ENCODE measurements at regions of chr6 and their contacts with region 1.

Region 1: DNA sequence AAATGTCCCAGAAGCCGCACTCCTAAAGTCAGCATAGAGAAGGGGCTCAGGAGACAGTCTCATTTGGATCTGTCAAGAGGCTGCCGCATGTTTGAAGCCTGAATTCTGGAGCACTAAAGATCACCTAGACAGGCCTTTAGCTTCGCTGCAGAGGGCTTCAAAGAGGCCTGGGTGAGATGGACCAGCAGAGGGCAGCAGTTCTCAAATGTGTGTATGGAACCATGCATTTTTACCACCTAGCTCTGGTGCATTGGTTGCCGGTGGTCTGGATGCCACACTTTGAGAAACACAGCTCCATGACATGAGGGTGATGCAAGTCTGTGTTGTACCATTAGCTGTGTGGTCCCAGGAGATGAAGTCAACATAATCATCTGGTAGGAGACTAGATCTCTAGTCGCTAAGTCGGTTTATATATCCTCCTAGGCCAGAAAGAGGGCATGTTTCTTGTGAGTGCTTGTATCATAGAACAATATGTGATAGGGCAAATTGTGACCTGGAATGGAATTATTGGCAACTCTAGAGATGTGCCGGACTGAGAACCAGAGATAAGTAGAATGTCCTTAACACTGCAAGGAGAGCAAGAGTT is 64.8 kb downstream of the KIAA0319 start:
- DNase-seq: peak; percentile 37 to 55 (median 55)
- H3K4me3 ChIP-seq: no peak overlapping the region
- H3K4me3 Mint-ChIP-seq: no peak overlapping the region
- H3K27ac ChIP-seq: no peak overlapping the region
- H3K27ac Mint-ChIP-seq: no peak overlapping the region
- H3K4me1 ChIP-seq: peaks cover 4 to 6% of the 10 kb centered on the region in 2 donors
- H3K4me1 Mint-ChIP-seq: peaks cover 6% of the 10 kb centered on the region
- H3K27me3 ChIP-seq: no peaks in the 10 kb centered on the region
- H3K27me3 Mint-ChIP-seq: peaks cover 3 to 5% (median 4%) of the 10 kb centered on the region in 3 donors
- CTCF ChIP-seq: peak; percentile 82

Region 2: GRCh38 chr6:24484657-24485323 is 96.4 kb before region 1 on chr6:
- intact Hi-C with region 1: no loop called
- DNase-seq: no peak
- H3K4me3 ChIP-seq: no peak overlapping the region
- H3K4me3 Mint-ChIP-seq: no peak overlapping the region
- H3K27ac ChIP-seq: no peak overlapping the region
- H3K27ac Mint-ChIP-seq: no peak overlapping the region
- H3K4me1 ChIP-seq: no peaks in the 10 kb centered on the region
- H3K4me1 Mint-ChIP-seq: peaks cover 5% of the 10 kb centered on the region
- H3K27me3 ChIP-seq: no peaks in the 10 kb centered on the region
- H3K27me3 Mint-ChIP-seq: no peaks in the 10 kb centered on the region
- CTCF ChIP-seq: no peak

Region 3: GRCh38 chr6:24689964-24690363 is 108.8 kb after region 1 on chr6:
- intact Hi-C with region 1: loop called in 1 of 2 experiments (anchors 2 kb)
- DNase-seq: no peak
- H3K4me3 ChIP-seq: no peak overlapping the region
- H3K4me3 Mint-ChIP-seq: no peak overlapping the region
- H3K27ac ChIP-seq: no peak overlapping the region
- H3K27ac Mint-ChIP-seq: no peak overlapping the region
- H3K4me1 ChIP-seq: peaks cover 6 to 9% of the 10 kb centered on the region in 2 donors
- H3K4me1 Mint-ChIP-seq: peaks cover 11% of the 10 kb centered on the region
- H3K27me3 ChIP-seq: no peaks in the 10 kb centered on the region
- H3K27me3 Mint-ChIP-seq: peaks cover 0 to 3% (median 0%) of the 10 kb centered on the region in 3 donors
- CTCF ChIP-seq: no peak

Region 4: DNA sequence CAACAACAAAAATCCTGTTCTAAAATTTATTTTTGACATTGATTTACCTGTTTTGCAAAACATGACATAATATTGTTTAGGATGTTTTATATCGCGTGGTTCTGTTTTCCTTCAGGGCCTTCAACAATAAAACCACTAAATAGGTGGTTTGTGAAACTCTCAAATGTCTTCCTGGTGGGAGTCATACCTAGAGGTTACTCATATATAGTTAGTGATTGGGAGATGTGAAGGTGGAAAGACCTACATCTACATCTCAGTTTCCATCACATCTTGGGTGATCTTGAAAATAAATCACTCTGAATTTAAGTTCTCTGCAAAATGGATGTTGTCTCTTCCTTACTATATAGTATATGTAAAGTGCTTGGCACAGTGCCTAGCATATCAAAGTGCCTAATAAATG is 114.9 kb after region 1 on chr6:
- intact Hi-C with region 1: loop called (anchors 2 kb)
- DNase-seq: no peak
- H3K4me3 ChIP-seq: no peak overlapping the region
- H3K4me3 Mint-ChIP-seq: no peak overlapping the region
- H3K27ac ChIP-seq: no peak overlapping the region
- H3K27ac Mint-ChIP-seq: no peak overlapping the region
- H3K4me1 ChIP-seq: no peaks in the 10 kb centered on the region
- H3K4me1 Mint-ChIP-seq: no peaks in the 10 kb centered on the region
- H3K27me3 ChIP-seq: no peaks in the 10 kb centered on the region
- H3K27me3 Mint-ChIP-seq: no peaks in the 10 kb centered on the region
- CTCF ChIP-seq: no peak

Region 5: GRCh38 chr6:24766680-24767462 is 185.7 kb after region 1 on chr6:
- intact Hi-C with region 1: loop called in 1 of 2 experiments (anchors 5 kb)
- DNase-seq: peak in 2 of 3 donors; percentile 50 to 76
- H3K4me3 ChIP-seq: no peak overlapping the region
- H3K4me3 Mint-ChIP-seq: no peak overlapping the region
- H3K27ac ChIP-seq: no peak overlapping the region
- H3K27ac Mint-ChIP-seq: no peak overlapping the region
- H3K4me1 ChIP-seq: no peaks in the 10 kb centered on the region
- H3K4me1 Mint-ChIP-seq: peaks cover 1% of the 10 kb centered on the region
- H3K27me3 ChIP-seq: no peaks in the 10 kb centered on the region
- H3K27me3 Mint-ChIP-seq: no peaks in the 10 kb centered on the region
- CTCF ChIP-seq: peak; percentile 75

Measured in CD14-positive monocyte (primary cell).